ENCODE measurements at regions of chr1 and their contacts with region 1.

Region 1: GRCh38 chr1:36187800-36188593 is 32.0 kb downstream of the MAP7D1 start:
- DNase-seq: peak; percentile 69
- H3K4me3 Mint-ChIP-seq: no peak overlapping the region
- H3K27ac Mint-ChIP-seq: peak overlapping the region; percentile 70
- H3K4me1 Mint-ChIP-seq: peaks cover 5% of the 10 kb centered on the region
- H3K27me3 Mint-ChIP-seq: no peaks in the 10 kb centered on the region

Region 2: DNA sequence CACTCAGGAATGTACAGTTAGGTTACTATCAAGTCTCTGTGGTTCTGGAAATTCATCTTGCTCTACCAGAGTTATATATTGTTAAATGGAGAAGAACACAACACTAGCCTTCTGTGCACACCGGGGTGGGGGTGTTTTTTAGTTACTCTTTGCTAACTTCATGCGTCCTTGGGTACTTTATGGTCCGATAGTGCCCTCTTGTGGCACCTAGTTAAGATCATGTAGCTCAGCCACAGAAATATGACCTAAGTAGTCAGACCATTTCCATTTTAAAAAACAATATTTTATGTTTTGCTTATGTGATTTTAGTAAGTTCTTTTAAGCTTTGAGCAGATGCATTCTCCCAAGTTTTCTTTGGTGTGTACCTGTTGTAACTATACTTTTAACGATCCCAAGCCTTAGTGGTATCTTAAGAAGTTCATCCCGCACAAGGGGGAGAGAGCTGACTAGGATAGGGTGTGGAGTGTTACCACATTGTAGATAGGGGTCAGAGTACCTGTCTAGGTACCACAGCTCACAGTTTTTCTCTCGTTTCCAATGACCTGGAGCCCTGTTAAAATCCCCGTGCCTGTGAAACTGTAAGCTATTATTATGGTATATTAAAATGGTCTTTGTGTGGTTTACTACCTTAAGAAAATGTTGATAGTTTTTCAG is 97.6 kb after region 1 on chr1:
- intact Hi-C with region 1: loop called (anchors 1 kb)
- DNase-seq: peak; percentile 51
- H3K4me3 Mint-ChIP-seq: no peak overlapping the region
- H3K27ac Mint-ChIP-seq: peak overlapping the region; percentile 73
- H3K4me1 Mint-ChIP-seq: peaks cover 27% of the 10 kb centered on the region
- H3K27me3 Mint-ChIP-seq: no peaks in the 10 kb centered on the region

Measured in activated T-helper 2 cell treated with anti-CD3 and anti-CD28 coated beads, Interferon-gamma antibody, Interleukin-2, Interleukin-4, amounts not matched to agents 10 μg/mL and 5 μg/mL and 100 μg/mL, durations not matched to agents 14 hours and 24 hours and 36 hours (primary cell).